ENCODE measurements at regions of chr19 and their contacts with region 1.

Region 1: GRCh38 chr19:5622463-5623396 is at the starts of genes SAFB and SAFB2:
- DNase-seq: peak; percentile 98
- ATAC-seq: peak; percentile 85
- H3K4me3 ChIP-seq: peak within 1 kb of the TSS; percentile 97 to 100 (median 99)
- H3K27ac ChIP-seq: peak within 1 kb of the TSS; percentile 94
- H3K4me1 ChIP-seq: peaks cover 65% of the 10 kb centered on the region
- H3K27me3 ChIP-seq: peaks cover 0 to 7% of the 10 kb centered on the region in 2 experiments; a peak in 2 of 5 replicates
- CTCF ChIP-seq: peak; percentile 21; the same call in 1 of the 2 replicates
- EP300 ChIP-seq: no peak
- POLR2A ChIP-seq: peak; percentile 84 to 93
- RAD21 ChIP-seq: 0 out of 2 replicates have a peak, but pooled peaks have one; percentile 22
- total RNA-seq, gene SAFB: 28.4 and 43.4 TPM in 2 replicates
- total RNA-seq, gene SAFB2: 22.9 and 31.5 TPM in 2 replicates

Region 2: GRCh38 chr19:5595129-5595528 is 27.6 kb before region 1 on chr19:
- CTCF ChIA-PET with region 1: no interaction called
- POLR2A ChIA-PET with region 1: interaction called, 12 read pairs
- in situ Hi-C with region 1: no loop called
- intact Hi-C with region 1: no loop called
- DNase-seq: no peak
- ATAC-seq: peak; percentile 6; the same call in 1 of the 3 replicates
- H3K4me3 ChIP-seq: no peak overlapping the region
- H3K27ac ChIP-seq: peak overlapping the region; percentile 78
- H3K4me1 ChIP-seq: peaks cover 22% of the 10 kb centered on the region
- H3K27me3 ChIP-seq: no peaks in the 10 kb centered on the region
- CTCF ChIP-seq: no peak
- EP300 ChIP-seq: no peak
- POLR2A ChIP-seq: no peak
- RAD21 ChIP-seq: no peak

Region 3: GRCh38 chr19:5642204-5642603 is 19.5 kb after region 1 on chr19:
- CTCF ChIA-PET with region 1: no interaction called
- POLR2A ChIA-PET with region 1: interaction called, 13 read pairs
- in situ Hi-C with region 1: no loop called
- intact Hi-C with region 1: no loop called
- DNase-seq: no peak
- ATAC-seq: peak; percentile 72
- H3K4me3 ChIP-seq: no peak overlapping the region
- H3K27ac ChIP-seq: peak overlapping the region; percentile 27
- H3K4me1 ChIP-seq: peaks cover 23% of the 10 kb centered on the region
- H3K27me3 ChIP-seq: no peaks in the 10 kb centered on the region
- CTCF ChIP-seq: no peak
- EP300 ChIP-seq: no peak
- POLR2A ChIP-seq: no peak
- RAD21 ChIP-seq: no peak

Region 4: DNA sequence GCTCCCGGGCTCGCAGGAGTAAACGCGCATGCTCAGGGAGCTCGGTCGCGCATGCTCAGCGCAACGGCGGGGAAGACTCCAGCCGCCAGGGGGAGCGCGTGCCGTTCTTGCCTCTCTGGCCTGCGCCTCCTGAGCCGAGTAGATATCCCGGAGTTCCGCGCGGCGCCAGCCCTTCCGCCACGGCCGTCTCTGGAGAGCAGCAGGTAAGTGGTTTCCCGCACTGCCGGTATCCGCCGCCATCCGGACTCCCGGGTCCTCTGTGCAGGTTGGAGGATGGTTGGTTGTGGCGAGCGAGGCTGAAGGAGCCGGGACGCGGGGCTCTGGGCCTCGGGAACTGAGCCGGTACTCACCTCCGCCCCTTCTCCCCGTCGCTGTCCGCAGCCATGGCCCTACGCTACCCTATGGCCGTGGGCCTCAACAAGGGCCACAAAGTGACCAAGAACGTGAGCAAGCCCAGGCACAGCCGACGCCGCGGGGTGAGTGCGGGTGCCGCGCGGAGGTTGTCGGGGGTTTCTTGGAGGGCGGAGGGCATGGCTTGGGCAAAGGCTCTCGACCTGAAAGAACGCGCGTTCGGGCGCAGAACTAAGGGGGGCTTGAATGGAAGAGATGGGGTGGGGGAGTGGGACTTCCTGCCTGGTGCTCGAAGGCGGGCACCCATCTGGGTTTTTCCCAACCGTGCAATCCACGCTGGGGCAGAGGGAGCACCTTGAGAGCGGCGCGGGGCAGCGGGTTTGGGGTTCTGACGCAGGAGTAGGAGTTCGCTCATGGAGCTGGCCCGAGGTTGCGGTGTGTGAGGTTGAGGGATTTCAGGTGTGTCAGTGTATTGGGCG is 67.6 kb after region 1 on chr19 and contains the start of gene RPL36:
- CTCF ChIA-PET with region 1: interaction called, 3 read pairs
- POLR2A ChIA-PET with region 1: interaction called, 21 read pairs
- in situ Hi-C with region 1: no loop called
- intact Hi-C with region 1: no loop called
- DNase-seq: peak; percentile 92
- ATAC-seq: peak; percentile 56
- H3K4me3 ChIP-seq: peak within 1 kb of the TSS; percentile 88 to 94 (median 89)
- H3K27ac ChIP-seq: peak within 1 kb of the TSS; percentile 92
- H3K4me1 ChIP-seq: peaks cover 34% of the 10 kb centered on the region
- H3K27me3 ChIP-seq: no peaks in the 10 kb centered on the region; a peak in 1 of 5 replicates
- CTCF ChIP-seq: peak; percentile 98
- EP300 ChIP-seq: no peak
- POLR2A ChIP-seq: peak; percentile 99
- RAD21 ChIP-seq: peak; percentile 64; the same call in 1 of the 2 replicates
- total RNA-seq, gene RPL36: 706 and 763 TPM in 2 replicates

Region 5: GRCh38 chr19:5719961-5720790 is 97.4 kb after region 1 on chr19 and contains the starts of genes CATSPERD and LONP1:
- CTCF ChIA-PET with region 1: no interaction called
- POLR2A ChIA-PET with region 1: interaction called, 12 read pairs
- in situ Hi-C with region 1: no loop called
- intact Hi-C with region 1: no loop called
- DNase-seq: peak; percentile 96
- ATAC-seq: peak; percentile 90
- H3K4me3 ChIP-seq: peak within 1 kb of the TSS; percentile 78 to 99 (median 98)
- H3K27ac ChIP-seq: peak within 1 kb of the TSS; percentile 95
- H3K4me1 ChIP-seq: peaks cover 24% of the 10 kb centered on the region
- H3K27me3 ChIP-seq: no peaks in the 10 kb centered on the region; a peak in 1 of 5 replicates
- CTCF ChIP-seq: peak; percentile 97
- EP300 ChIP-seq: no peak
- POLR2A ChIP-seq: peak; percentile 88 to 93
- RAD21 ChIP-seq: peak; percentile 62; the same call in 1 of the 2 replicates
- total RNA-seq, gene CATSPERD: not detected in 2 replicates
- total RNA-seq, gene LONP1: 50.4 and 76.8 TPM in 2 replicates

Measured in HepG2 (cell line).